ENCODE measurements at regions of chr6 and their contacts with region 1.

Region 1: GRCh38 chr6:15384901-15385300 is 139.0 kb downstream of the JARID2 start:
- DNase-seq: no peak
- H3K4me3 ChIP-seq: no peak overlapping the region
- H3K4me3 Mint-ChIP-seq: no peak overlapping the region
- H3K27ac Mint-ChIP-seq: no peak overlapping the region
- H3K4me1 ChIP-seq: no peaks in the 10 kb centered on the region; the same call in 1 of the 2 replicates
- H3K4me1 Mint-ChIP-seq: peaks cover 8% of the 10 kb centered on the region
- H3K27me3 ChIP-seq: no peaks in the 10 kb centered on the region
- H3K27me3 Mint-ChIP-seq: no peaks in the 10 kb centered on the region
- CTCF ChIP-seq: no peak

Region 2: DNA sequence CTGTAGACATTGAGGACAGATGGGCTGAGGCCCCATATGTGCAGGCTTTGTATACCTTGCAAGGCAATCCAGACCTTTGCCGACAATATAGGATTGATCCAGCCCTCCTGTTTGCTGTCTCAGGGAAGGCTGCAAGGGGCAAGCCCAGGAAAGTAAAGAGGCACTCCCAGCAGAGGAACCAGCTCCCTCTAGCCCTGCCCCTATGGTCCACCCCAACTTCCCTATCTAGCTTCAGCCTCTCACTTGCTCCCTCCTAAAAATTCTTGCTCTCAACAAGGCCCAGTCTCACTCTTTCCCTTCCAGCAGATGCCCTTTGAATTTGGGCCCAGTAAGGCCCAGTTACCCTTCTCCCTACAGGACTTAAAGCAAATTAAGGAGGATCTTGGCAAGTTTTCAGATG is 46.4 kb before region 1 on chr6:
- CTCF ChIA-PET with region 1: no interaction called
- POLR2A ChIA-PET with region 1: no interaction called
- intact Hi-C with region 1: loop called (anchors 1 kb)
- DNase-seq: no peak
- H3K4me3 ChIP-seq: no peak overlapping the region
- H3K4me3 Mint-ChIP-seq: no peak overlapping the region
- H3K27ac Mint-ChIP-seq: no peak overlapping the region
- H3K4me1 ChIP-seq: peaks cover 3% of the 10 kb centered on the region; the same call in 1 of the 2 replicates
- H3K4me1 Mint-ChIP-seq: peaks cover 8% of the 10 kb centered on the region
- H3K27me3 ChIP-seq: no peaks in the 10 kb centered on the region
- H3K27me3 Mint-ChIP-seq: no peaks in the 10 kb centered on the region
- CTCF ChIP-seq: no peak

Region 3: DNA sequence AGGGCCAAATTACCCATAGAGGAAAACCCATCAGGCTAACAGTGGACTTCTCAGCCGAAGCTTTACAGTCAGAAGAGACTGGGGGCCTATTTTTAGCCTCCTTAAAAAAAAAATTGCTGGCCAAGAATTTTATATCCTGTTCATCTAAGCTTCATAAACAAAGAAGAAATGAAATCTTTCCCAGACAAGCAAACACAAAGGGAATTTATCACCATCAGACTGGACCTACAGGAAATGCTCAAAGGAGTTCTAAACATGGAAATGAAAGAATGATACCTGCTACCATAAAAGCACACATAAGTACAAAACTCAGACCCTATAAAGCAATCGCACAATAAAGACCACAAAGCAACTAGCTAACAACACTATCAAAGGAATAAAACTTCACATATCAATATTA is 258.6 kb after region 1 on chr6:
- CTCF ChIA-PET with region 1: no interaction called
- POLR2A ChIA-PET with region 1: no interaction called
- intact Hi-C with region 1: no loop called
- DNase-seq: no peak
- H3K4me3 ChIP-seq: no peak overlapping the region
- H3K4me3 Mint-ChIP-seq: no peak overlapping the region
- H3K27ac Mint-ChIP-seq: no peak overlapping the region
- H3K4me1 ChIP-seq: peaks cover 5% of the 10 kb centered on the region; the same call in 1 of the 2 replicates
- H3K4me1 Mint-ChIP-seq: no peaks in the 10 kb centered on the region
- H3K27me3 ChIP-seq: no peaks in the 10 kb centered on the region
- H3K27me3 Mint-ChIP-seq: no peaks in the 10 kb centered on the region
- CTCF ChIP-seq: no peak

Measured in Caco-2 (cell line).